ENCODE measurements at regions of chr1 and their contacts with region 1.

Region 1: DNA sequence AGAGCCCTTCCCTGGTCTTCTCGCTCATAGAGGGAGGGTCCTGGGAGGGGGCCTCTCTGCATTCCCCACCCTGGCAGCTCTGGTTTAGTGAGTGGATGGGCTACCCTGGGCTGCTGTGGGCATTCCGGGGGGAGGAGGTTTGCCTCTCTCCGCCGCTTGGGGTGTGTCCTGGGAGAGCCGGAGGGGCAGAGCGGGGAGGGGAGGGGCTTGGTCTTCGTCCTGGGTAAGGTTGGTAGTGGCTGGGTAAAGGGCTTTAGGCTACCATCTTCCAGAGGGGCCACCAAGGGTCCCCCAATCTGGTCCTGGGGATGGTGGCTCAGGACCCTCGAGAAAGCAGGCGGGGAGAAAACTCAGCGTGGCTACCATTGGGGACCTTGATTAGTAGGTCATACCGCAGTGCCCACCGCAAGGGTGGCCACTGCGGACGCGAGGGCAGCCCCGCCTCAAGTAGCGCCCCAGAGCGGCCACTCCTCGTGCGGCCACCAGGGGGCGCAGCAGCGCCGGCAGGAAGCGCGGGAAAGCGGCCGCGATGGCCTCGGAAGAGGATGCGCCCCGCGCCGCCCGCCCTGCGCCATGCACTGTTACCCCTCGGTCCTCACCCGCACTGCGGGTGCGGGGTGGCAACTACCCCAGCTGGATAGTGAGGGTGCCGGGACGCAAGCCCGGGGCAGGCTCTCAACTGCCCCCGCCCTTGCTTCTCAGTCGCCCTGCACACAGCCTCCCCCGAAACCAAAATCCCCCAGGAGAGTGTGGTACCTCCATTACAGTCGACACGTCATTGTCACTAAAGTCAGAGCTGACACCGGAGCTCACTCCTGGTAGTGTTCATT is 44.1 kb upstream of the SLC25A33 start:
- DNase-seq: no peak
- H3K4me3 ChIP-seq: peak overlapping the region; percentile 36
- H3K27ac ChIP-seq: no peak overlapping the region
- H3K27me3 ChIP-seq: peaks cover 15% of the 10 kb centered on the region
- CTCF ChIP-seq: peak; percentile 86

Region 2: GRCh38 chr1:9269078-9269501 is 226.1 kb before region 1 on chr1:
- CTCF ChIA-PET with region 1: interaction called, 34 read pairs
- POLR2A ChIA-PET with region 1: interaction called, 7 read pairs
- DNase-seq: no peak
- H3K4me3 ChIP-seq: no peak overlapping the region
- H3K27ac ChIP-seq: no peak overlapping the region
- H3K27me3 ChIP-seq: no peaks in the 10 kb centered on the region
- CTCF ChIP-seq: no peak

Region 3: GRCh38 chr1:9292361-9293240 is 202.5 kb before region 1 on chr1 and contains the start of gene SPSB1:
- CTCF ChIA-PET with region 1: interaction called, 74 read pairs
- POLR2A ChIA-PET with region 1: interaction called, 5 read pairs
- DNase-seq: no peak
- H3K4me3 ChIP-seq: peak within 1 kb of the TSS; percentile 99
- H3K27ac ChIP-seq: peak within 1 kb of the TSS; percentile 91
- H3K27me3 ChIP-seq: no peaks in the 10 kb centered on the region
- CTCF ChIP-seq: no peak
- polyA plus RNA-seq, gene SPSB1: 19.4 and 20.3 TPM in 2 replicates

Region 4: DNA sequence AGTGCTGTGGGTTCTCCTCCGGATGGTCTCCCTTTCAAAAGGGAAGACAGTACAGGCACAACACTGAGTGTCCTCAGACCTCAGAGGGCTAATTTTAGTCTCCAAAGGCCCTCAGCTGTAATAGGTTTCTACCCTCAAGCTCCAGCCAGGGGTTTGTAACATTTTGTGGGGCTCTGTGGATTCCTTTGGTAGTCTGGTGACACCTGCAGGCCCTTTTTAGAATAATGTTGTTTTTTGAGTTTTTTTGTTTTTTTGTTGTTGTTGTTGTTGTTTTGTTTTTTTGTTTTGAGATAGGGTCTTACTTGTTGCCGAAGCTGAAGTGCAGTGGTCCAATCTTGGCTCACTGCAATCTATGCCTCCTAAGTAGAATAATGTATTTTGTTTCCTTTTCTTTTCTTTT is 78.6 kb after region 1 on chr1:
- CTCF ChIA-PET with region 1: interaction called, 55 read pairs
- POLR2A ChIA-PET with region 1: no interaction called
- DNase-seq: no peak
- H3K4me3 ChIP-seq: no peak overlapping the region
- H3K27ac ChIP-seq: no peak overlapping the region
- H3K27me3 ChIP-seq: no peaks in the 10 kb centered on the region
- CTCF ChIP-seq: peak; percentile 47